CD14-positive monocyte (primary cell): ENCODE measurements at regions of chr20 and their contacts with region 1.

Region 1: DNA sequence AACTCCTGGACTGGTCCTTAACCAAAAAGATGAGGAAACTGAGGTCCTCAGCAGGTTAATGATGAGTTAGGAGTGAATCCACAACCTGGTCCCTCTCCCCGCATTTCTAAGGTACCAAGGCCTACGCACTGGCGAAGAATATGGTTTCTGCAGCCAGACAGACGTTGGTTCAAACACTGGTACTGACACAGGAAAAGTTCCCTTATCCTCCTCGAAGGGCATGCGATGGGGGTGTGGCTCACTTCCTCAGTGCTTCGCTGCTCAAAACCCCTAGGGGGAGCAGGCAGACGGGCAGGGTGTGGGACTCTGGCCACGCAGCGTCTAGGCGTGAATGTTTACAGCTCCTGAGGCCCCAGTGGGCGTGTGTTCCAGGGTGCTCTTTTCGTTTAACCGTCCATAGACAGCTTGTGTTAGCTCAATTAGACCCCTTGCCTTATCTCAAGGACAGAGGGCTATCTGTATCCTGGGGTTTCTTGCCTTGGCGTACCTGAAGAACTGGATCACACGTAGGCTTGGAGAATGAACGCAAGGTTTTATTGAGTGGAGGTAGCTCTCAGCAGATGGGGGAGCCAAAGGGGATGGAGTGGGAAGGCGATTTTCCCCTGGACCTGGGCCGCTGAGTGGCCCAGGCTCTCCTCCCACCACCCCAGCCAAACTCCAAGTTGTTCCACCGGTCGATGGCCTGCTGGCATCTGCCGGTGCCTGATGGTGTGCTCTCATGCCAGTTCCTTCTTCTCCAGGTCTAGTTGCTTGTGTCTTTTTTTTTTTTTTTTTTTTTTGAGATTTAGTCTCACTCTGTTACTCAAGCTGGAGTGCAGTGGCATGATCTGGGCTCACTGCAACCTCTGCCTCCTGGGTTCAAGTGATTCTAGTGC is 31.8 kb upstream of the PTPN1 start:
- DNase-seq: peak; percentile 81 to 88 (median 84)
- H3K4me3 ChIP-seq: no peak overlapping the region
- H3K4me3 Mint-ChIP-seq: peak overlapping the region in 1 of 2 donors; percentile 48
- H3K27ac ChIP-seq: no peak overlapping the region
- H3K27ac Mint-ChIP-seq: peak overlapping the region in 4 of 7 donors; percentile 45 to 77 (median 57)
- H3K4me1 ChIP-seq: peaks cover 28 to 39% of the 10 kb centered on the region in 2 donors
- H3K4me1 Mint-ChIP-seq: peaks cover 41% of the 10 kb centered on the region
- H3K27me3 ChIP-seq: no peaks in the 10 kb centered on the region
- H3K27me3 Mint-ChIP-seq: no peaks in the 10 kb centered on the region
- CTCF ChIP-seq: peak; percentile 86

Region 2: DNA sequence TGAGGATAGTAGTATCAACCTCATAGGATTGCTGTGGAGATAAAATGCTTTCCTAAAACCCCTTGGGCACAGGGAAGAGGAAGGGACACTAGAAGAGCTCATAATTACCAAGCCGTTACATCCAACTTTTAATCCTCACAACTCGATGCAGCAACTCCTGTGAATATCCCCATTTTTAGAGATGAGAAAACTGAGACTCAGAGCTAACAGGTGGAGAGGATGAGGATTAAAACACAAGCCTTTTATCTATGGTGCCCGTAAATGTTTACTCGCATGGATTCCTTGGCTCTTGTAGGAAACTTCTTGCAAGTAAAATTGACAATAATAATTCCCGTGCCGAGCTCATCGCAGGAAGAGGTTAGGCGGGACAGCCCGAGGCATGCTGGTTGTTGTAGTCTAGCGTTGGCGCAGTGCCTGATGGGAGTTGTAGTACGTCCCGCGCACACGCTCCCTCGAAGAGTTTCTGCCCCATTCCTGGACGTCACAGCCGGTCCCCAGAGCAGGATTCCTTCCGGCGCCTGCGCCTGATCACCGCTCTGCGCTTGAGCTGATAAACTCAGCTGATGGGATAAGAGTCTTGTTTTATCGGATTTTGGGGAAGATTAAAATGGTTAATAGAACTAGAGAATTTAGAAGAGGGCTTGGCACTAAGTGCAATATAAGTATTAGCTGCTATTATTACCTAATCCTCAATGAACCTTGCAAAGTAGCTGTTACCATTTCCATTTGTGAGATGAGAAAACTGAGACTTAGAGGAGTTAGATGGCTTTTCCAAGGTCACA is 362.6 kb before region 1 on chr20:
- intact Hi-C with region 1: loop called in 1 of 2 experiments (anchors 10 kb)
- DNase-seq: peak; percentile 87 to 96 (median 90)
- H3K4me3 ChIP-seq: peak overlapping the region; percentile 49 to 82 (median 75)
- H3K4me3 Mint-ChIP-seq: peak overlapping the region; percentile 74 to 89
- H3K27ac ChIP-seq: peak overlapping the region in 1 of 2 donors; percentile 78
- H3K27ac Mint-ChIP-seq: peak overlapping the region; percentile 71 to 96 (median 92)
- H3K4me1 ChIP-seq: peaks cover 37 to 53% of the 10 kb centered on the region in 2 donors
- H3K4me1 Mint-ChIP-seq: peaks cover 52% of the 10 kb centered on the region
- H3K27me3 ChIP-seq: no peaks in the 10 kb centered on the region
- H3K27me3 Mint-ChIP-seq: peaks cover 0 to 4% (median 2%) of the 10 kb centered on the region in 3 donors
- CTCF ChIP-seq: no peak

Region 3: GRCh38 chr20:50516180-50516934 is 38.0 kb after region 1 on chr20:
- intact Hi-C with region 1: loop called (anchors 2 to 10 kb)
- DNase-seq: peak; percentile 58 to 81 (median 78)
- H3K4me3 ChIP-seq: peak overlapping the region in 1 of 3 experiments; percentile 52
- H3K4me3 Mint-ChIP-seq: peak overlapping the region in 1 of 2 donors; percentile 75
- H3K27ac ChIP-seq: peak overlapping the region; percentile 1 to 88
- H3K27ac Mint-ChIP-seq: peak overlapping the region; percentile 88 to 97 (median 90)
- H3K4me1 ChIP-seq: peaks cover 96 to 100% of the 10 kb centered on the region in 2 donors
- H3K4me1 Mint-ChIP-seq: peaks cover 96% of the 10 kb centered on the region
- H3K27me3 ChIP-seq: no peaks in the 10 kb centered on the region
- H3K27me3 Mint-ChIP-seq: no peaks in the 10 kb centered on the region
- CTCF ChIP-seq: no peak

Region 4: GRCh38 chr20:50528804-50529351 is 50.5 kb after region 1 on chr20:
- intact Hi-C with region 1: loop called in 1 of 2 experiments (anchors 10 kb)
- DNase-seq: no peak
- H3K4me3 ChIP-seq: no peak overlapping the region
- H3K4me3 Mint-ChIP-seq: no peak overlapping the region
- H3K27ac ChIP-seq: no peak overlapping the region
- H3K27ac Mint-ChIP-seq: peak overlapping the region in 3 of 7 donors; percentile 15 to 45 (median 31)
- H3K4me1 ChIP-seq: peaks cover 18 to 35% of the 10 kb centered on the region in 2 donors
- H3K4me1 Mint-ChIP-seq: peaks cover 32% of the 10 kb centered on the region
- H3K27me3 ChIP-seq: no peaks in the 10 kb centered on the region
- H3K27me3 Mint-ChIP-seq: no peaks in the 10 kb centered on the region
- CTCF ChIP-seq: no peak

Region 5: GRCh38 chr20:50575847-50576720 is 97.7 kb after region 1 on chr20:
- intact Hi-C with region 1: loop called (anchors 2 to 5 kb)
- DNase-seq: peak; percentile 34 to 49 (median 43)
- H3K4me3 ChIP-seq: no peak overlapping the region
- H3K4me3 Mint-ChIP-seq: no peak overlapping the region
- H3K27ac ChIP-seq: no peak overlapping the region
- H3K27ac Mint-ChIP-seq: peak overlapping the region in 4 of 7 donors; percentile 7 to 81 (median 28)
- H3K4me1 ChIP-seq: peaks cover 0 to 6% of the 10 kb centered on the region in 2 donors
- H3K4me1 Mint-ChIP-seq: peaks cover 17% of the 10 kb centered on the region
- H3K27me3 ChIP-seq: no peaks in the 10 kb centered on the region
- H3K27me3 Mint-ChIP-seq: no peaks in the 10 kb centered on the region
- CTCF ChIP-seq: peak; percentile 71